GM12878 (cell line): ENCODE measurements at regions of chr1 and their contacts with region 1.

Region 1: GRCh38 chr1:18965206-18966173 is 9.0 kb upstream of the IFFO2 start:
- DNase-seq: no peak
- ATAC-seq: peak; percentile 90
- H3K4me3 ChIP-seq: no peak overlapping the region
- H3K27ac ChIP-seq: no peak overlapping the region
- H3K4me1 ChIP-seq: peaks cover 7% of the 10 kb centered on the region; the same call in 1 of the 2 replicates
- H3K27me3 ChIP-seq: peaks cover under 1 to 1% of the 10 kb centered on the region in 2 experiments; a peak in 2 of 4 replicates
- CTCF ChIP-seq: peak in 1 of 3 experiments; percentile 43; a peak in 2 of 6 replicates
- EP300 ChIP-seq: no peak
- POLR2A ChIP-seq: no peak
- RAD21 ChIP-seq: peak; percentile 54

Region 2: GRCh38 chr1:18949686-18950400 is 15.6 kb before region 1 on chr1:
- CTCF ChIA-PET with region 1: interaction called, 15 read pairs
- POLR2A ChIA-PET with region 1: no interaction called
- RAD21 ChIA-PET with region 1: interaction called, 8 read pairs
- SMC1A ChIA-PET with region 1: interaction called, 3 read pairs
- in situ Hi-C with region 1: no loop called
- intact Hi-C with region 1: no loop called
- DNase-seq: no peak
- ATAC-seq: peak; percentile 7; the same call in 1 of the 3 replicates
- H3K4me3 ChIP-seq: peak overlapping the region; percentile 73
- H3K27ac ChIP-seq: peak overlapping the region; percentile 99
- H3K4me1 ChIP-seq: peaks cover 64% of the 10 kb centered on the region
- H3K27me3 ChIP-seq: no peaks in the 10 kb centered on the region
- CTCF ChIP-seq: peak; percentile 28 to 46 (median 41); a peak in 5 of 6 replicates
- EP300 ChIP-seq: no peak
- POLR2A ChIP-seq: no peak
- RAD21 ChIP-seq: peak; percentile 40

Region 3: GRCh38 chr1:19033861-19034680 is 68.6 kb after region 1 on chr1:
- CTCF ChIA-PET with region 1: no interaction called
- POLR2A ChIA-PET with region 1: no interaction called
- RAD21 ChIA-PET with region 1: no interaction called
- SMC1A ChIA-PET with region 1: no interaction called
- in situ Hi-C with region 1: no loop called
- intact Hi-C with region 1: no loop called
- DNase-seq: no peak
- ATAC-seq: no peak
- H3K4me3 ChIP-seq: no peak overlapping the region
- H3K27ac ChIP-seq: no peak overlapping the region
- H3K4me1 ChIP-seq: no peaks in the 10 kb centered on the region
- H3K27me3 ChIP-seq: peaks cover 0 to 5% of the 10 kb centered on the region in 2 experiments; a peak in 2 of 4 replicates
- CTCF ChIP-seq: no peak
- EP300 ChIP-seq: no peak
- POLR2A ChIP-seq: no peak
- RAD21 ChIP-seq: no peak

Region 4: DNA sequence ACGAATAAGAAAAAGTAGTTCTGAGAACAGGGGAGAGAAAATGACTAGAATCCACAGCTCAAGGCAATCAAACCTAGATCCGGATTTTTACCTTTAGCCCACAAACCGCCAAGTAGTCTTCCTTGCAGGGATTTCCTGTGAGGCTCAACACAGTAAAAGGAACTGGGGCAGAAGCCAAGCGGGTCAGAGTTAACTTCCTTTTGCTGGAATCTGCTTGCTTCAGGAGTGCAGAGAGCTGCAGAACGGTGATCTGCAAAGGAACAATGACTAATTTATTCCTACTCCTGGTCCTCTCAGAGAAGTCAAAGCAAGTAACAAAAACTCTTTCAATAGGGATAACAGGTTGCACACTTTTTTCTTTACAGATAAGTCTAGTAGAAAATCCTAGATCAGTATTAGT is 191.2 kb after region 1 on chr1:
- CTCF ChIA-PET with region 1: no interaction called
- POLR2A ChIA-PET with region 1: interaction called, 14 read pairs
- RAD21 ChIA-PET with region 1: no interaction called
- SMC1A ChIA-PET with region 1: no interaction called
- in situ Hi-C with region 1: no loop called
- intact Hi-C with region 1: no loop called
- DNase-seq: no peak
- ATAC-seq: no peak
- H3K4me3 ChIP-seq: no peak overlapping the region
- H3K27ac ChIP-seq: no peak overlapping the region
- H3K4me1 ChIP-seq: no peaks in the 10 kb centered on the region
- H3K27me3 ChIP-seq: no peaks in the 10 kb centered on the region
- CTCF ChIP-seq: no peak
- EP300 ChIP-seq: no peak
- POLR2A ChIP-seq: no peak
- RAD21 ChIP-seq: no peak

Region 5: DNA sequence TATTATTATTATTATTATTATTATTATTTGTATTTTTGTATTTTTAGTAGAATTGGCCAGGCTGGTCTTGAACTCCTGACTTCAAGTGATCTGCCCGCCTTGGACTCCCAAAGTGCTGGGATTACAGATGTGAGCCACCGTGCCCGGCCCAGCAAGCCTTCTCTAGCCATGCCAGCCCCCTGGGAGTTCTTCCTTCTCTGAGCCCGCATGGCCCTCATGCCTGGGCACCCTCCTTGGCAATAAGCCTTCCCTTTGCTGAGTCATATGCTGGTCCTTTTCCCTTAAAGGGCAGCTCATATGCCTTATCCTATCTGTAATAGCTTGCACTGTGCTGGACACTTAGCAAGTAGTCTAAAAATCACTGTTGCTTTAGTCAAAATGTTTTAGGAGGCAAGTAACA is 670.2 kb after region 1 on chr1:
- CTCF ChIA-PET with region 1: no interaction called
- POLR2A ChIA-PET with region 1: no interaction called
- RAD21 ChIA-PET with region 1: no interaction called
- SMC1A ChIA-PET with region 1: no interaction called
- in situ Hi-C with region 1: no loop called
- intact Hi-C with region 1: no loop called
- DNase-seq: no peak
- ATAC-seq: no peak
- H3K4me3 ChIP-seq: no peak overlapping the region
- H3K27ac ChIP-seq: no peak overlapping the region
- H3K4me1 ChIP-seq: no peaks in the 10 kb centered on the region
- H3K27me3 ChIP-seq: no peaks in the 10 kb centered on the region; a peak in 1 of 4 replicates
- CTCF ChIP-seq: no peak
- EP300 ChIP-seq: no peak
- POLR2A ChIP-seq: no peak
- RAD21 ChIP-seq: no peak